ENCODE measurements at regions of chrX and their contacts with region 1.

Region 1: GRCh38 chrX:153862369-153863250 is 23.4 kb downstream of the L1CAM start:
- DNase-seq: no peak
- H3K4me3 ChIP-seq: no peak overlapping the region
- H3K27ac ChIP-seq: no peak overlapping the region
- H3K4me1 ChIP-seq: no peaks in the 10 kb centered on the region
- H3K27me3 ChIP-seq: no peaks in the 10 kb centered on the region
- CTCF ChIP-seq: no peak
- POLR2A ChIP-seq: no peak

Region 2: GRCh38 chrX:153102436-153102835 is 760.2 kb before region 1 on chrX:
- intact Hi-C with region 1: loop called (anchors 10 kb)
- DNase-seq: no peak
- H3K4me3 ChIP-seq: no peak overlapping the region
- H3K27ac ChIP-seq: no peak overlapping the region
- H3K4me1 ChIP-seq: no peaks in the 10 kb centered on the region
- H3K27me3 ChIP-seq: no peaks in the 10 kb centered on the region
- CTCF ChIP-seq: no peak
- POLR2A ChIP-seq: no peak

Region 3: GRCh38 chrX:153722704-153723353 is 139.8 kb before region 1 on chrX:
- intact Hi-C with region 1: no loop called
- DNase-seq: no peak
- H3K4me3 ChIP-seq: peak overlapping the region; percentile 59 to 63
- H3K27ac ChIP-seq: peak overlapping the region; percentile 74
- H3K4me1 ChIP-seq: peaks cover 48% of the 10 kb centered on the region
- H3K27me3 ChIP-seq: no peaks in the 10 kb centered on the region
- CTCF ChIP-seq: no peak
- POLR2A ChIP-seq: no peak

Region 4: GRCh38 chrX:153971450-153972367 is 109.1 kb after region 1 on chrX and contains the start of gene HCFC1:
- intact Hi-C with region 1: no loop called
- DNase-seq: peak in 1 of 2 donors; percentile 97
- H3K4me3 ChIP-seq: peak within 1 kb of the TSS; percentile 75 to 94
- H3K27ac ChIP-seq: peak within 1 kb of the TSS; percentile 97
- H3K4me1 ChIP-seq: peaks cover 54% of the 10 kb centered on the region
- H3K27me3 ChIP-seq: no peaks in the 10 kb centered on the region
- CTCF ChIP-seq: no peak
- POLR2A ChIP-seq: peak in 1 of 2 donors; percentile 40
- total RNA-seq, gene HCFC1: 38.8 TPM